ENCODE measurements at regions of chr1 and their contacts with region 1.

Region 1: DNA sequence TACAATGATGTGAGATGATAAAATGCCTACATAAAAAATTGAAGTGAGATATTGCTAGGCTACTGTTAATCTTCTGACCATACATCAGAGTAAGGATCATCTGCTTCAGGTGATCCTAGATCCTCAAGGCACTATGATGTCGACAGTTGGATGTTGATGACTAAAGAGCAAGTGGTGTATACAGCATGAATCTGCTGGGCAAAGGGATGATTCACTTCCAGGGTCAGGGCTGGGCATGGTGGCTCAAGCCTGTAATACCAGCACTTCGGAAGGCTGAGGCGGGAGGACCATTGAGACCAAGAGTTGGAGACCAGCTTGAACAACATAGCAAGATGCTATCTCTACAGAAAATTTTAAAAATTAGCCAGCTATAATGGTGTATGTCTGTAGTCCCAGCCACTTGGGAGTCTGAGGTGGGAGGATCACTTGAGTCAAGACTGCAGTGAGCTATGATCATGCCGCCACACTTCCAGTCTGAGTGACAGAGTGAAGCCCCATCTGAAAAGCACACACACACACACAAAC is 24.7 kb downstream of the NUF2 start:
- DNase-seq: no peak
- H3K4me3 Mint-ChIP-seq: no peak overlapping the region
- H3K27ac Mint-ChIP-seq: no peak overlapping the region
- H3K4me1 Mint-ChIP-seq: peaks cover 3% of the 10 kb centered on the region
- H3K27me3 Mint-ChIP-seq: no peaks in the 10 kb centered on the region

Region 2: DNA sequence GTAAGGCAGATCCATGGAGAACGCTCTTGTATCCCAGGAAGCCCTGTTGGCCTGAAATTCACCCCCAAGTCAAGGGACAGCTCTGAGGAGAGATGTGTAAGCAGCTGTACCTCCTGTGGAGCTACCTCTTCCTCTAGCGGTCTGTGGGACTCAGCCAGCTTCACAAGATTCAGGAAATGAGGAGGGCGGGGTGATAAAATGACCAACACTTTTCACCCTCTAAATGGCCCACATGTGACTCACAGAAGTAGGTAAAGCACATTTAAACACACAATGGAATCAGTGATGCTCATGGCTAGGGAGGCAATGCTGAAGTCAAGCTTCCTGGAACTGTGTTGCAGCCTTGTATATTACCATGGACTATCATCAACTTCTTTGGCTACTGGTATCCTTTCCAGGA is 934.4 kb before region 1 on chr1 and contains the start of gene SH2D1B:
- intact Hi-C with region 1: no loop called
- DNase-seq: no peak
- H3K4me3 Mint-ChIP-seq: no peak within 1 kb of the TSS
- H3K27ac Mint-ChIP-seq: peak within 1 kb of the TSS; percentile 71
- H3K4me1 Mint-ChIP-seq: peaks cover 13% of the 10 kb centered on the region
- H3K27me3 Mint-ChIP-seq: no peaks in the 10 kb centered on the region
- total RNA-seq, gene SH2D1B: 0.84 and 1.0 TPM in 2 replicates

Region 3: GRCh38 chr1:163335216-163335615 is 11.2 kb before region 1 on chr1:
- intact Hi-C with region 1: loop called (anchors 1 kb)
- DNase-seq: no peak
- H3K4me3 Mint-ChIP-seq: no peak overlapping the region
- H3K27ac Mint-ChIP-seq: no peak overlapping the region
- H3K4me1 Mint-ChIP-seq: peaks cover 4% of the 10 kb centered on the region
- H3K27me3 Mint-ChIP-seq: no peaks in the 10 kb centered on the region

Region 4: DNA sequence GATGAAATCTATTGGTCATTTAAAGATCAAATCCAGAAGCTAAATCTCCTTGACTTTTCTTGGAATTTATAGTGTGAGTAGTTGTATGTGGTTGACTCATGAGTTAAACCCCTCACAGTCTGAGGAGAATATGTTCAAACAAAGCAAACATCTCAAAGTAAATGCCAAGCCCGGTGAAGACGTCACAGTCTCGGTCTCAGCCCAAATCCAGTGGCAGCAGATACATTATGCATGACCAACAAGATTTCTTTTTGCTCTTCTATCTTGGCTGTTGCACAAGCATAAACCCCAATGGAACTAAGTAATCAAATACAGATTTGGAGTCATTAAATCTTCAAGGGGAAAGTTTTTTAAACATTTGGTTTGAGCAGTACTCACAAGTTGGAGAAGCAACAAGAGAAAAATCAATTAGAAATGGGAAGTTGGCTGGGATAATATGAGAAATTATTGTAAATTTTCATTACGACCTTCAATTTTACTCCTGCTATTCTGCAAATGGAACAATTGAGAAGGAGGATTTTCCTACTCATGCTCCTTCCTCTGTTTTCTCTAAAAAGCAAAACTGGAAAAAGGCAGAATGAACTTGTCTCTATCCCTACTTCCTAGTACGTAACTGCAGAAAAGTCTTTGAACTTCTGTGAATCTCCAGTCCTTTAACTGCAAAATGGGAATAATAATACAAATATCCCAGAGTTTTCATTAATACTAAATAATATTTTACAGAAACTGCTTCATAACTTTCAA is 551.2 kb after region 1 on chr1:
- intact Hi-C with region 1: no loop called
- DNase-seq: no peak
- H3K4me3 Mint-ChIP-seq: no peak overlapping the region
- H3K27ac Mint-ChIP-seq: no peak overlapping the region
- H3K4me1 Mint-ChIP-seq: no peaks in the 10 kb centered on the region
- H3K27me3 Mint-ChIP-seq: no peaks in the 10 kb centered on the region